GM10248 (cell line): ENCODE measurements at regions of chr19 and their contacts with region 1.

Region 1: DNA sequence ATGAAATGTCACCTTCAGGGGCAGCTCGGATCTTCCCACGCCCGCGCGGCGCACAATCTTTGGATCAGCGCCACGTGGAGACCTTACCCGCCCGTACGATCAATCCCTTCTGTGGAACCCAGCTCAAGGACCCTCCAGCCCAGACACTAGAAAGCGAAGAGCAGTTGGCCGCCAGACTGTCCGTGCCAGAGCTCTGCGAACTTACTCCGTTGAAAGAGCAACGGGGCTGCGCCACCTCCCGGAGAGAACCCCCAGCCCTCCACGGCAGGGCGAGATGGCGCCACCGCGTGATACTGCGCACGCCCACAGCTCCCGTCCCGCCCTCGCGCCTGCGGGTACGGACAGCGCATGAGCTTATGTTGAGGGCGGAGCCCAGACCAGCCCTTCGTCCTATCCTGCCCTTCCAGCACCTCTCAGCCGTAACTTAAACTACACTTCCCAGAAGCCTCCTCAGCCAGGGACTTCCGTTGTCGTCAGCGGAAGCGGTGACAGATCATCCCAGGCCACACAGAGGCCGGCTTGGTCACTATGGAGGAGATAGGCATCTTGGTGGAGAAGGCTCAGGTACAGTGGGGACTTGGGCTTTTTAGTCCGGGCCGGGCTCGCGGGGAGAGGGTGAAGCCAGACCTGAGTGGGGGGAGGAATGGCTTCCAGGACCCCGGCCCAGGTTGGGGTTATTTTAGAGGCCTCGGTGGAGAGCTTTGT is at the start of gene PSMC4:
- DNase-seq: peak; percentile 99
- CTCF ChIP-seq: peak; percentile 93

Region 2: GRCh38 chr19:39813264-39813993 is 157.4 kb before region 1 on chr19:
- CTCF ChIA-PET with region 1: no interaction called
- POLR2A ChIA-PET with region 1: no interaction called
- DNase-seq: no peak
- CTCF ChIP-seq: no peak

Region 3: DNA sequence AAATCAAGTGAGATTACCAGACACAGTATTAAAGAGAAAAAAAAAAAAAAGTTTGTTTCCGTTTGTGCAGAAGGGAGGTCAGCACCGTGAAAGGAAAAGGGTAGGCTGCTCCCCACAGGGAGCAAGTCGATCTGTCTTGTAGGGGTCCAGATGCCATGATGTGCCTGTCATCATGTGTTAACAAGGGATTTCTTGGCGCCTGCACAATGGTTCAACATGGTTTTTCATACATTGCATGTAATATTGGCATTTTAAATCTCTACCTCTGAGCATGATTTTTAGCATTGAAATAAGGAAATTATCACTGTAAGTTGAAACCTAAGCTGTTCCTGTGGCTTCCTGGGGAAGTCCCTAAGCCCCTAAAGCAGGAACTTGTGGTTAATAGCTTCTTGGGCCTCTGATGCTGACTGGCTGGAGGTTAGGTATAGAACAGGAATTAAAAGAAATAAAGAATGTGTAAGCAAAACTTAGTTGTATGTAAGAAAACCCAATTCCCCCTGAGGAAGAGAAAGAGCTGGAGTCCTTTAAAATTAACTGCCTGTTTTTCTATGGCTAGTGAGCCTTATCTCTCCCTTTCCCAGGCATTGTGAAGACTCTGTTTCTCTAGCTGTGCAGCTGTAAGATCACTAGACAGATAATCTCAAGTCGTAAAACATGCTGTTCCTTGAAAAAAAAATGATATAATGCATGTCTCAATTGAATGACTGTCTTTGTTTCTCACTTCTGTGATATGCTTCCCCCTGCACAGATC is 29.0 kb before region 1 on chr19:
- CTCF ChIA-PET with region 1: interaction called, 17 read pairs
- POLR2A ChIA-PET with region 1: no interaction called
- DNase-seq: peak; percentile 51
- CTCF ChIP-seq: no peak

Region 4: DNA sequence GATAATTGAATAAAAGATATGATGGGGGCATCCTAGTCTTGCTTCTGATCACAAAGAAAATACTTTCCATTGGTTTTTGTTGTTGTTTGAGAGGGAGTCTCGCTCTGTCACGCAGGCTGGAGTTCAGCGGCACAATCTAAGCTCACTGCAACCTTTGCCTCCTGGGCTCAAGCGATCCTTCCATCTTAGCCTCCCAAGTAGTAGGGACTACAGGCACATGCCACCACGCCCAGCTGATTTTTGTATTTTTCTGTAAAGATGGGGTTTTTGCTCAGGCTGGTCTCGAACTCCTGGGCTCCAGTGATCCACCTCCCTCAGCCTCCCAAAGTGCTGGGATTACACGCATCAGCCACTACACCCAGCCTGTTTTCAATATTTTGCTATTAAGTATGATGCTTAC is 16.9 kb before region 1 on chr19:
- CTCF ChIA-PET with region 1: interaction called, 17 read pairs
- POLR2A ChIA-PET with region 1: interaction called, 4 read pairs
- DNase-seq: no peak
- CTCF ChIP-seq: no peak

Region 5: GRCh38 chr19:39996811-39997594 is 26.2 kb after region 1 on chr19 and contains the start of gene ZNF546:
- CTCF ChIA-PET with region 1: interaction called, 17 read pairs
- POLR2A ChIA-PET with region 1: interaction called, 10 read pairs
- DNase-seq: peak; percentile 95
- CTCF ChIP-seq: no peak

Region 6: GRCh38 chr19:40080289-40080688 is 109.5 kb after region 1 on chr19:
- CTCF ChIA-PET with region 1: no interaction called
- POLR2A ChIA-PET with region 1: no interaction called
- DNase-seq: no peak
- CTCF ChIP-seq: no peak

Region 7: GRCh38 chr19:40200341-40201099 is 229.7 kb after region 1 on chr19:
- CTCF ChIA-PET with region 1: no interaction called
- POLR2A ChIA-PET with region 1: no interaction called
- DNase-seq: no peak
- CTCF ChIP-seq: no peak